AG04450 (cell line): ENCODE measurements at regions of chr17 and their contacts with region 1.

Region 1: GRCh38 chr17:42112552-42113176 is at the start of gene DHX58:
- DNase-seq: peak; percentile 53
- H3K4me3 ChIP-seq: peak within 1 kb of the TSS; percentile 48
- H3K27ac ChIP-seq: peak within 1 kb of the TSS; percentile 47
- H3K27me3 ChIP-seq: no peaks in the 10 kb centered on the region
- CTCF ChIP-seq: no peak
- polyA plus RNA-seq, gene DHX58: 2.0 and 2.9 TPM in 2 replicates

Region 2: DNA sequence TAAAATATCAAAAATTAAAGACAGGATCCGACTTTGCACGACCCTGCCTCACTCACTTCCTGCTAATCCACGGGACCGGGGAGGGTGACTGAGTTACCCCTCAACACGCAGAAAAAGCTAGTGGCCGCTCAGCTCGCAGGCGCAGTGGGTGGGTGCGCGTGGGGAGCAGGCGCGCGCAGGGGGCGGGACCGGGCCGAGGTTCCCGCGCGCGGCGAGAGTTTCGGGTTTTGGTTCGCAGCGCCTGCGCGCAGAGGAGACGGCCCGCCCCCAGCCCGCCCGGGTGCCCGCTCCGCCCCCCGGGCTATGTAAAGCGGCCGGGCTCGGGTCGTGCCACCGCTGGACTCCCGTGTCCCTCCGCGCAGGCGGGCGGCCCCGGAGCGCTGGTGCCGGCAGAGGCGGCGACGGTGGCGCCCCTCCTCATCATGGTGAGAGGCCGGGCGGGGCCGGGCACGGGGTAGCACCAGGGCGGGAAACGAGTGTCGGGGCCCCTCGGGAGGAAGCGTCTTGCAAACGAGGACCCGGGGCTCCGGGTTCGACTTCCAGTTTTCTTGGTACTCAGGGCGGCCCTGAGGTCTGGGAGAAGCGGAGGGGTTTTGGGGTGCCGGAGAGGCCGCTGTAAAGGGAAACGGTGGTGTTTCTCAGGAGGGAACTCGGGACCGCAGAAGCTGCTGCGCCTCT is 146.1 kb before region 1 on chr17 and contains the start of gene CNP:
- CTCF ChIA-PET with region 1: interaction called, 19 read pairs
- POLR2A ChIA-PET with region 1: interaction called, 17 read pairs
- DNase-seq: peak; percentile 53
- H3K4me3 ChIP-seq: peak within 1 kb of the TSS; percentile 84
- H3K27ac ChIP-seq: peak within 1 kb of the TSS; percentile 65
- H3K27me3 ChIP-seq: peaks cover under 1% of the 10 kb centered on the region
- CTCF ChIP-seq: no peak
- polyA plus RNA-seq, gene CNP: 53.0 and 85.7 TPM in 2 replicates

Region 3: GRCh38 chr17:42025191-42025579 is 87.5 kb before region 1 on chr17:
- CTCF ChIA-PET with region 1: interaction called, 10 read pairs
- POLR2A ChIA-PET with region 1: interaction called, 5 read pairs
- DNase-seq: no peak
- H3K4me3 ChIP-seq: 0 out of 2 replicates have a peak overlapping the region, but pooled peaks have one; percentile 4
- H3K27ac ChIP-seq: peak overlapping the region; percentile 85
- H3K27me3 ChIP-seq: peaks cover 4% of the 10 kb centered on the region
- CTCF ChIP-seq: no peak

Region 4: DNA sequence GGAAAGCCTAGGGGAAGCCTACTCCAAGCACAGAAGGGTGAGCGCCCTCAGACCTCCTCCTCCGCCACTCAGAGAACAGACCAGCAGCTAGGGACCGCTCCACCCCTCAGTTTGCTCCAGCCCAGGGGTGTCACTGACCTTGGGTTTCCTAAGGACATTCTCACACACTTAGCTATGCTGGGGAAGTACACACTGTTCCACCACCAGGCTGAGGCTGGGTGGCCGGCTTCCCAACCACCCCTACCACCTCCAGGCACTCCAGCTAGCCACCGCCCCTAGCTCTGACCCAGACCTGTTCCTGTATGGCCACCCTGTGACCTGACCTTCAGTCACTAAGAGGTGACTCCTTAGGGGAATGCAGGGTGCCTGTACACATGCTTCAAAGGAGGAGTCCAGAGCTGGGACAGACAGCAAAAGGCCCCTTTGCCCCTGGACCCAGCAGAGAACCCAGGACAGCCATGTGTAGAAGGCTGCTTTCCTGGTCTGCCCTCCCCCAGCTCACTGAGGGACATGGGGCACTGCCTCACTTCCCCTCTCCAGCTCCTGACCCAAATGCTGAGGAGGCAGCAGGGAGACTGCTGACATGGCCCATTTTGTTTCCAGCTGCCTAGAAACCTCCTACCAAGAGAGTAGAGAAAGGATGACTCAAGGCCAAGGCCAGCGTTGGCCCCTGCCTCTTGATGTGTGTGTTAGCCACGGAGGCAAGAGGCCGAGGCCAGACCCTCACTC is 16.6 kb after region 1 on chr17:
- CTCF ChIA-PET with region 1: no interaction called
- POLR2A ChIA-PET with region 1: no interaction called
- DNase-seq: no peak
- H3K4me3 ChIP-seq: no peak overlapping the region
- H3K27ac ChIP-seq: no peak overlapping the region
- H3K27me3 ChIP-seq: no peaks in the 10 kb centered on the region
- CTCF ChIP-seq: no peak

Region 5: DNA sequence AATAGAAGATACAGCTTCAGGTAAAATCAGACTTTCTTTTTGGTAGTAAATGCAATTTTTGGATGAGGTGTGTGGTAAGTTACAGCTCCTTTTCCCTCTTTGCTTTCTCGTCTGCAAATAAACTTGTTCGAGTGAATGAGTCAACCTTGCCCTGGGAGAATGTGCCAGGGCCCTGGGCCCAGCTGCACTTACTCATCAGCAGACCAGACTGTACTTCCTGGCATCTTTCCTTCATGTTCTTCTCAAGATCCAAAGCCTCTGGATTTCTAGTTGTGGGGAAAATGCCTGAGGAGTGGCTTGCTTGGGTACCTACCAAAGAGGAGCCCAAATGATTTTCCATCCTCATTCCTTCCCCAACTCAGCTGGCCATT is 782.5 kb after region 1 on chr17:
- CTCF ChIA-PET with region 1: no interaction called
- POLR2A ChIA-PET with region 1: no interaction called
- DNase-seq: peak; percentile 68
- H3K4me3 ChIP-seq: no peak overlapping the region
- H3K27ac ChIP-seq: no peak overlapping the region
- H3K27me3 ChIP-seq: peaks cover 4% of the 10 kb centered on the region
- CTCF ChIP-seq: no peak